PC-9 (cell line): ENCODE measurements at regions of chr4 and their contacts with region 1.

Region 1: DNA sequence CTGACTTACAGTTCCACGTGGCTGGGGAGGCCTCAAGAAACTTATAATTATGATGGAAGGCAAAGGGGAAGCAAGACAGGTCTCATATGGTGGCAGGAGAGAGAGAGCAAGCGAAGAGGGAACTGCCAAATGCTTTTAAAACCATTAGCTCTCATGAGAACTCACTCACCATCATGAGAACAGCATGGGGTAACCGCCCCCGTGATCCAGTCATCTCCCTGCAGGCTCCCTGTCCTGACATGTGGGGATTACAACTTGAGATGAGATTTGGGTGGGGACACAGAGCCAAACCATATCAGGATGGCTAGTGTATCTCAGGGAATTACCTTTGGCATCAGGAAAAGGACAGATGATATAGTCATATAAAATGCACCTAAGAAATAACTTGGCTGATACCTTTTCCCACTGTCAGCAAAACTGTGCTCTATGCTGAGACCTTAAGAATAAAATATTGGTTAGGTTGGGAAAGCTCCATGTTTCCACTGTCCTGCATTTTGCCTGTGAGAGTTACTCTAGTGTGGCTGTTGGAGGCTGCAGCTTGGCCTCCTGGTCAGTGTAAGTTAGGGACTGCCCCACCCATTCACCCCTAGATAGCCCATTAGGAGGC is 110.3 kb downstream of the UCHL1 start:
- DNase-seq: no peak
- H3K4me3 ChIP-seq: no peak overlapping the region
- H3K27ac ChIP-seq: no peak overlapping the region
- H3K4me1 ChIP-seq: peaks cover 24% of the 10 kb centered on the region
- H3K27me3 ChIP-seq: no peaks in the 10 kb centered on the region
- CTCF ChIP-seq: no peak

Region 2: DNA sequence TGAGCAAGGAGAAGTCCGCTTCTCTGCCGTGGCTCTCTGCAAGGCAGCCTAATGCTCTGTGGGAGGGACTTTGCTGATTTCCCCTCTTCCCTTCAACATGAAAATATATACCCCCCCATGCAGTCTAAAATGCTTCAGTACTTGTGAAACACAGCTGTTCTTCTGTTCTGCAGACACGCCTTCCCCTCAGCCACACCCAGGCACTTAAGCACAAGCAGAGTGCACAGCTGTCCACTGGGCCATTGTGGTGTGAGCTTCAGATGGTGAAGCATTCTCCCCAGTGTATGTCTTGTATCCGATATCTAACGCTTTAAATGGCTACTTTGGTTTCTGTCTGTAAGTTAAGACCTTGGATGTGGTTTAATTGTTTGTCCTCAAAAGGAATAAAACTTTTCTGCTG is 99.0 kb before region 1 on chr4:
- CTCF ChIA-PET with region 1: no interaction called
- POLR2A ChIA-PET with region 1: interaction called, 17 read pairs
- intact Hi-C with region 1: no loop called
- DNase-seq: no peak
- H3K4me3 ChIP-seq: no peak overlapping the region
- H3K27ac ChIP-seq: no peak overlapping the region
- H3K4me1 ChIP-seq: no peaks in the 10 kb centered on the region
- H3K27me3 ChIP-seq: no peaks in the 10 kb centered on the region
- CTCF ChIP-seq: no peak